ENCODE measurements at regions of chr20 and their contacts with region 1.

Region 1: DNA sequence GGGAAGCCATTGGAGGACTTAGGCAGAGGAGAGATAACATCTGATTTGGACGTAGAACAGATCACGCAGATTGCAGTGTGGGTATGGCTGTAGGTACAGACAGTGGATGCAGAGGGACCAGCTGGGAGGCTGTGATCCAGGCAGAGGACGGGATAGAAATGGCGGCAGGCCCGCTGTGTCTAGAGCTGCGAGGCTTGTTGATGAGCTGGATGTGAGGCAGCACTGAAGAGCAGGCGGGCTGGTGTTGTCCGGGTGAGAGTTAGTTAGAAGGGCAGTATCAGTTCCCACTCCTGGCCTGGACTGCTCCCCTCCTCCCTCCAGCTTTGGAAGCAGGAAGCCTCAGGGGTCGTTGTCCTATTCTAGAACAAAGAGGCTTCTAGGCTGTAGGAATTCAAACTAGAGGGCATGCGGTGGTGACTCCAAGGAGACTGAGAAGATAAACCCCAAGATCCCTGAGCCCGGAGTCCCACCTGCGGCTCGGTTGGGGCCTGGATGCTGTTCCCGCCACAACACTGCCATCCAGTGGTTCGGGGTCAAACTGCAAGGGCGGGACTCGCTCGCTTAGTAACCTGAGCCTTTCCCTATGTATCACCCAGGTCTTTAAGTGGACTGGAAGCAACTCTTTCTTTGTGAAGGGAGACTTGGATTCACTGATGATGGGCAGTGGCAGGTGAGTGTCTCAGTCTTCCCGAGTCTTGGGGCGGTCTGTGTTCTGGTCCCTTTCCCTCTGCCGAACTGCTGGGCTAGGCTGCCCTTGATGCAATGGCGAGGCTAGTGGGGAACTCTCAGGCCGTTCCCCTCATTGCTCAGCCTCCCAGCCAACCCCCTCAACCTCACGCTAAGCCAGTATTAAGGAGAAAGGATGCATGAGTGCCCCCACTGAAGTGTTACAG is 11.2 kb downstream of the TLDC2 start:
- DNase-seq: peak; percentile 79
- H3K4me3 ChIP-seq: no peak overlapping the region
- H3K27ac ChIP-seq: no peak overlapping the region
- H3K4me1 ChIP-seq: peaks cover 4% of the 10 kb centered on the region
- CTCF ChIP-seq: peak; percentile 95

Region 2: GRCh38 chr20:36613974-36614373 is 273.1 kb before region 1 on chr20:
- CTCF ChIA-PET with region 1: interaction called, 3 read pairs
- POLR2A ChIA-PET with region 1: no interaction called
- intact Hi-C with region 1: loop called (anchors 2 kb)
- DNase-seq: no peak
- H3K4me3 ChIP-seq: no peak overlapping the region
- H3K27ac ChIP-seq: no peak overlapping the region
- H3K4me1 ChIP-seq: no peaks in the 10 kb centered on the region
- CTCF ChIP-seq: no peak

Region 3: GRCh38 chr20:36792422-36792821 is 94.7 kb before region 1 on chr20:
- CTCF ChIA-PET with region 1: no interaction called
- POLR2A ChIA-PET with region 1: interaction called, 3 read pairs
- intact Hi-C with region 1: loop called (anchors 1 kb)
- DNase-seq: peak; percentile 83
- H3K4me3 ChIP-seq: no peak overlapping the region
- H3K27ac ChIP-seq: peak overlapping the region; percentile 40
- H3K4me1 ChIP-seq: peaks cover 20% of the 10 kb centered on the region
- CTCF ChIP-seq: peak; percentile 81

Region 4: DNA sequence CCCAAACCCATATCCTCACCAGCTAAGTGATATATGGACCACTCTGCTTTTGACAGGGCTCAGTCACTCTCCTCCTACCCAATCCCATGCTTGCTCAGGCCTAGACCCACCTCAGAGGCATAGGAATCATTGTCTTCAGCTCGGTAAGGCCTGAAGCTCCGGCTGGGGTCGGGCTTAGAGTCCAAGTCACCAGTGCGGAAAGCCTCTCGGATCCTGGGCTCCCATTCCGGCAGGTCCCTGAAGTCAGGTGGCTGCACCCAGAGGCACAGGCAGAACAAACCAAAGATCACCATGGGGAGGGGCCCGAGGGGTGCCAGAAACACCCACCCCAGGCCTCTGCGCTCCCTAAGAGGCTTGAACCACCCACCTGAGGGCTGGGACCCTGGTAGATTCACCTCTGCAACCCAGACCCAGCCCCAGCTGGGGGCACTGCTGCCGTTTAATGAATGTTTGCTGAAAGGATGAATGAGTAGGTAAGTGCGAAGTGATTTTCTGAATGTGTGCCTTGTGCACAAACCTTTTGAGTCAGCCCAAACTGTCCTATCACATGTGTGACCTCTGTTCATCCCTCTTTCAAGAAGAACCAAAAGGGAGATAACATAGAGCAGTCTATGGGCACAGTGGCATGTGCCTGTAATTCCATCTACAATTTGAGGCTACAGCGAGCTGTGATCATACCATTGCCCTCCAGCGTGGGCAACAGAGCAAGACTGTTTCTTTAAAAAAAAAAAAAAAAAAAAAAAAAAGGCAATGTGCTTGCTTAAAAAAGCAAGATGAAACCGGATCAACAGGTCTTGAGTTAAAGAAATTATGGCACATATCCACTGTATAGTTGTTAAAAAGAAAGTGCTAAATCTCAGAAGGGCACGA is 74.3 kb before region 1 on chr20:
- CTCF ChIA-PET with region 1: no interaction called
- POLR2A ChIA-PET with region 1: no interaction called
- intact Hi-C with region 1: loop called (anchors 5 kb)
- DNase-seq: no peak
- H3K4me3 ChIP-seq: no peak overlapping the region
- H3K27ac ChIP-seq: no peak overlapping the region
- H3K4me1 ChIP-seq: no peaks in the 10 kb centered on the region
- CTCF ChIP-seq: 0 out of 2 replicates have a peak, but pooled peaks have one; percentile 24

Measured in OCI-LY7 (cell line).